ENCODE measurements at regions of chr5 and their contacts with region 1.

Region 1: GRCh38 chr5:95773335-95774059 is 42.4 kb downstream of the RHOBTB3 start:
- DNase-seq: peak; percentile 33
- H3K4me3 ChIP-seq: no peak overlapping the region
- H3K27ac ChIP-seq: no peak overlapping the region
- H3K4me1 ChIP-seq: peaks cover 20% of the 10 kb centered on the region
- H3K27me3 ChIP-seq: no peaks in the 10 kb centered on the region
- CTCF ChIP-seq: no peak
- POLR2A ChIP-seq: no peak

Region 2: GRCh38 chr5:95664204-95664786 is 109.2 kb before region 1 on chr5:
- CTCF ChIA-PET with region 1: interaction called, 4 read pairs
- POLR2A ChIA-PET with region 1: no interaction called
- dilution Hi-C with region 1: no loop called
- intact Hi-C with region 1: loop called (anchors 2 kb)
- DNase-seq: peak; percentile 74
- H3K4me3 ChIP-seq: no peak overlapping the region
- H3K27ac ChIP-seq: no peak overlapping the region
- H3K4me1 ChIP-seq: peaks cover 15% of the 10 kb centered on the region
- H3K27me3 ChIP-seq: no peaks in the 10 kb centered on the region
- CTCF ChIP-seq: peak; percentile 54 to 60
- POLR2A ChIP-seq: no peak

Region 3: DNA sequence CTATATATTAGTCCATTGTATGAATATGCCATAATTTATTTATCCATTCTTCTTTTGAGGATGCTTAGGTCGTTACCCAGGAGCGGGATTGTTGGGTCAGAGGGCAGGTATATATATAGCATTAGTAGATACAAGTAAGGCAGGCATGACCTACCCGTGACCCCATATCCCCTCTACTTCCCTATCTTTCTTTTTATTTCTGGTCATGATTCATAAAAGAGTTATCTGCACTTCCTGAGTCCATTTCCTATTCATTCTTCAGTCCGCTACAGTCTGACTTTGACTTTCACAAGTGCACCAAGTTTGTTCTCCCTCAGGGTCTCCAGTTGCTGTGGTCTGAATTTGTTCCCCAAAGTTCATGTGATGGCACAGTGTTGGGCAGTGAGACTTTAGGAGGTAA is 35.4 kb before region 1 on chr5:
- CTCF ChIA-PET with region 1: no interaction called
- POLR2A ChIA-PET with region 1: no interaction called
- dilution Hi-C with region 1: no loop called
- intact Hi-C with region 1: loop called (anchors 2 kb)
- DNase-seq: peak; percentile 76
- H3K4me3 ChIP-seq: no peak overlapping the region
- H3K27ac ChIP-seq: peak overlapping the region; percentile 60
- H3K4me1 ChIP-seq: peaks cover 38% of the 10 kb centered on the region
- H3K27me3 ChIP-seq: no peaks in the 10 kb centered on the region
- CTCF ChIP-seq: no peak
- POLR2A ChIP-seq: peak; percentile 39

Region 4: DNA sequence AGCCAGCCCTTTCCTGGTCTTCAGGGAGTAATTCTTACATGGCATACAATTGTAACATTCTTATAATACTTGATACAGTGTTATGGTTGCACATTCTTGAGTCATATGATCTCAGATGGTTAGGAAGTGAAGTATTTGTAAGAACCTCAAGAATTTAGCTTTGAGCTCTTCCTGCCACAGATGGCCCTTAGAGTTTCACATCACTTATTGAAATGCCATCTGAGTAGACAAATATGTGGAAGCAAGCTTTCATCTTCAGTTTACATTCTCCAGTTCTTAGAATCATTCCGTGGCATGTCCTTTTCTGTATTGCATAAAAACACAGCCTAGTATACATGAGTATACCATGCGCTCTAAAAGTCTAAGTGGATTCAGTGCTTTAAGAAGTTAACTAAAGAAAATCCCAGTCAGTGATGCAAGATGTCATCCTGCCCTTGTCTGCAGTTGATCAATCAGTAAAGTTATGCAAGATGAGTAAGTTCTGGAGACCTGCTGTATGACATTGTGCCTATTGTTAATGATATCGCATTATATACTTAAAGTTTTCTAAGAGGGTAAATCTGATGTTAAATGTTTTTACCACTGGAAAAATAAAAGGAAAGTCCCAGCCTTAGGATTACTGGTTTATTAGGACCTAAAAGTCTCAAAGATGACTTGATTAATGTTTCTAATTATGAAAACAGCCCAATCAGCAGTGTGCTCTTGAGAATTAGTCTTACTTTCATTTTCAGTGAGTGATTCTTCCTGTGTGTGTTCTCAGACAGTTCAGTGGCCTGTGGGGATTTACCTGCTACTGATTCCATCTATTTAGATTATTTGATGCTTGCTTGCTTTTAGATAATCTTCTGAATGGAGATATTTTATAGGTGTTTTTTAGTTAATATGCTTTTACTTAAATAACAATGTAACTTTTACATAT is 13.0 kb before region 1 on chr5:
- CTCF ChIA-PET with region 1: interaction called, 11 read pairs
- POLR2A ChIA-PET with region 1: no interaction called
- dilution Hi-C with region 1: no loop called
- intact Hi-C with region 1: no loop called
- DNase-seq: peak; percentile 78
- H3K4me3 ChIP-seq: peak overlapping the region in 1 of 3 experiments; percentile 17
- H3K27ac ChIP-seq: peak overlapping the region; percentile 78
- H3K4me1 ChIP-seq: peaks cover 36% of the 10 kb centered on the region
- H3K27me3 ChIP-seq: no peaks in the 10 kb centered on the region
- CTCF ChIP-seq: no peak
- POLR2A ChIP-seq: no peak

Region 5: GRCh38 chr5:95915999-95916686 is 142.6 kb after region 1 on chr5:
- CTCF ChIA-PET with region 1: no interaction called
- POLR2A ChIA-PET with region 1: no interaction called
- dilution Hi-C with region 1: no loop called
- intact Hi-C with region 1: no loop called
- DNase-seq: no peak
- H3K4me3 ChIP-seq: no peak overlapping the region
- H3K27ac ChIP-seq: no peak overlapping the region
- H3K4me1 ChIP-seq: no peaks in the 10 kb centered on the region
- H3K27me3 ChIP-seq: no peaks in the 10 kb centered on the region
- CTCF ChIP-seq: no peak
- POLR2A ChIP-seq: no peak

Measured in endothelial cell of umbilical vein (primary cell).